Left ventricle myocardium inferior (tissue), 1 donor: ENCODE measurements at regions of chr17 and their contacts with region 1.

Region 1: GRCh38 chr17:29140051-29140621 is 40.1 kb downstream of the MYO18A start:
- DNase-seq: peak; percentile 91
- H3K4me3 ChIP-seq: peak overlapping the region; percentile 72
- H3K27ac ChIP-seq: peak overlapping the region; percentile 93
- H3K4me1 ChIP-seq: peaks cover 84% of the 10 kb centered on the region
- H3K27me3 ChIP-seq: no peaks in the 10 kb centered on the region
- CTCF ChIP-seq: no peak

Region 2: GRCh38 chr17:28951991-28952975 is 187.9 kb before region 1 on chr17:
- intact Hi-C with region 1: no loop called
- DNase-seq: peak; percentile 96
- H3K4me3 ChIP-seq: peak overlapping the region; percentile 95
- H3K27ac ChIP-seq: peak overlapping the region; percentile 100
- H3K4me1 ChIP-seq: peaks cover 54% of the 10 kb centered on the region
- H3K27me3 ChIP-seq: no peaks in the 10 kb centered on the region
- CTCF ChIP-seq: no peak

Region 3: GRCh38 chr17:29031488-29031887 is 108.6 kb before region 1 on chr17:
- intact Hi-C with region 1: no loop called
- DNase-seq: no peak
- H3K4me3 ChIP-seq: no peak overlapping the region
- H3K27ac ChIP-seq: no peak overlapping the region
- H3K4me1 ChIP-seq: no peaks in the 10 kb centered on the region
- H3K27me3 ChIP-seq: peaks cover 75% of the 10 kb centered on the region
- CTCF ChIP-seq: no peak

Region 4: DNA sequence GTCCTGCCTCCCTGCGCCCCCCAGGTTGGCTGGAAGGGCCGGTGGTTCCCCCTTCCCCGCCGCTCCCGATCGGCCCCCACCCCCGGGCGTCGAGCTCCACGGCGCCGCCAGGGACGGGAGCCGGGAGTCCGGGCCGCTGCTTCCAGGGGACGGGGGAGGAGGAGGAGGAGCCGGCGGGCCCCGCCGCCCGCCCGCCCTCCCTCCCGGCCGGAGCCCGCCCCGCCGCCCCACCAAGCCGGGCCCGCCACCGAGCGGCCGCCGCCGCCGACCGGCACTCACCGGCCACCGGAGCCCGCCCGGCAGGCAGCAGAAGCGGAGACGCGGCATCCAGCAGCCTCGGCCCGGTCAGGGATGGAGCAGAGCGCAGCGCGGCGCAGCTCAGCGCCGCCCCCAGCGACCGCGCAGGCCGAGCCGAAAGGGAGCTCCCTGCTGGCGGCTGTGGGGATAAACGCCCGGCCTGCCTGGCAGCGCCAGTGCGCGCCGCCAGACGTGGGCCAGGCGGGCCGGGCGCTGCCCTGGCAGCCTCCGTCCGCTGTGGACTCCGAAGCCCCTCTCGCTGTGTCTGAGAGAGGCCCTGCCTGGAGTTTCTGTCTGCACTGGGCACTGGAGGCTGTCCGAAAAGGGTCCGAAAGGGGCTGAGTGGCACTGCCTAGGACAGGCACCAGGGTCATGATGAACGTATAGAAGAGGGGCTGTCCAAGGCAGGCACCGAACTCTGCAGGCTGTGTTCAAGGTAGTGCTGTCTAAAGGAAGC is 40.1 kb after region 1 on chr17 and contains the start of gene MYO18A:
- intact Hi-C with region 1: loop called (anchors 5 kb)
- DNase-seq: peak; percentile 80
- H3K4me3 ChIP-seq: peak within 1 kb of the TSS; percentile 81
- H3K27ac ChIP-seq: peak within 1 kb of the TSS; percentile 92
- H3K4me1 ChIP-seq: peaks cover 57% of the 10 kb centered on the region
- H3K27me3 ChIP-seq: no peaks in the 10 kb centered on the region
- CTCF ChIP-seq: peak; percentile 92
- total RNA-seq, gene MYO18A: 397 TPM

Region 5: DNA sequence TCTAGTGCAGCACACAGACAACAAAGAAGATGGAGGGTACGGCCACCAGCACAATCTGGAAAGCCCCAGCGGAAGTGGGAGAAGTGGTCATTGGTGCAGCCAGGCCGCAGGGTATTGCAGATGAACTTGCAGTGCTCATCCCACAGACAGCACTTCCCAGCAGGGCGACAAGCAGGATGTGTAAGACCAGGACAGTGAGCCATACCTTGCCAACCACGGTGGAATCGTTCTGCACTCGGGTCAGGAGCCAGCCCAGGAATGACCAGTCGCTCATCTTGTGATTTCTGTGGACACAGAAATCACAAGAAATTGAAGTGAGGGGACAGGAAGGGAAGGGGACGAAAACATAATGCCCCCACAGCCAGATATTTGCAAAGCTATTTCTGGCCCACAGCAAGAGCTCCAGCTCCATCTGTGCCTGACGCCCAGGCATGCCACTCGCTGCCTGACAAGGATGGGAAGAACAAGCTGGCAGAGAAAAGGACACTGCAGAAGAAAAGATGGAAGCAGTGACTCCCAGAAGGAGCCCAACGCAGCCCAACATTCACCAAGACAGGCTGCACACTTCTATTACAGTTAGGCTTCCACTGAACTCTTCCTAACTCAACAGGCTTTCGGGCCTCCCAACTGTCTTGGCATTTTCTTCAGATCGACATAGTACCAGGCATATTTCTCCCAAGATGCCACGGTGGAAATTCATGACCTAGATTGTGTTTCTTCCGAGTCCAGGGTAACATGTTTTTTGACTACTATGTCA is 57.6 kb after region 1 on chr17:
- intact Hi-C with region 1: no loop called
- DNase-seq: no peak
- H3K4me3 ChIP-seq: no peak overlapping the region
- H3K27ac ChIP-seq: no peak overlapping the region
- H3K4me1 ChIP-seq: no peaks in the 10 kb centered on the region
- H3K27me3 ChIP-seq: no peaks in the 10 kb centered on the region
- CTCF ChIP-seq: no peak